Aorta (tissue), 5 donors: ENCODE measurements at regions of chr1 and their contacts with region 1.

Region 1: GRCh38 chr1:228783418-228784040 is 48.2 kb downstream of the RHOU start:
- DNase-seq: no peak
- ATAC-seq: no peak
- H3K4me3 ChIP-seq: no peak overlapping the region
- H3K27ac ChIP-seq: no peak overlapping the region
- H3K4me1 ChIP-seq: no peaks in the 10 kb centered on the region
- H3K27me3 ChIP-seq: no peaks in the 10 kb centered on the region

Region 2: GRCh38 chr1:228760979-228761378 is 22.6 kb before region 1 on chr1:
- intact Hi-C with region 1: loop called in 1 of 2 experiments (anchors 1 kb)
- DNase-seq: no peak
- ATAC-seq: no peak
- H3K4me3 ChIP-seq: no peak overlapping the region
- H3K27ac ChIP-seq: no peak overlapping the region
- H3K4me1 ChIP-seq: no peaks in the 10 kb centered on the region
- H3K27me3 ChIP-seq: peaks cover 0 to 2% of the 10 kb centered on the region in 2 donors